ENCODE measurements at regions of chr12 and their contacts with region 1.

Region 1: DNA sequence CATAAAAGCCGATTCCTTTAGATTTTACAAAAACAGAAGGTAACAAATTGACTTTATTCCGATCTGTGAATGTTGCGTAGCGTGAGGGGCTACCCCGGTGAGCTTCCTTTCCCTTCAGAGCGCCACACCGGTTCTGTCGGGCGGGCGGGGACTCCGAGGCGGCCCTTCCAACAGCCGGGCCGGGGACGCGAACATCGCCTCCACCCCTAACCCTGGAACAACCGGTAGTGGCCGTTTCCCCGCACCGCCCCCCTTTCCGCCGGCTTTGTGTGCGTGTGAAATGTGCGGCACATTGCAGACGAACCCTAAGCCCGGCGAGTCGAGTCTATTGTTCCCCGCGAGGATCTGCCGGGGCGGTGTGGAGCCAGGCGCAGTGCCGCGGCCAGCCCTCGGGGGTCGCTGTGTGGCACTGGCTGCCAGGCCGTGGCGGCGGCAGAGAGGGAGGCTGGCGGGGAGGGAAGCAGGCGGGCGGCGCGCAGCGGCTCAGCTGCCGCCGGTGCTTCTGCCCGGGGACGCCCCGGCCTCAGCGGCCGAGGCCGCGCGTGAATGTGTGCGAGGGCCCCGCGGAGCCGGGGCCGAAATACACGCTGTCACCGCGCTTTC is 775 bp upstream of the ARID2 start:
- DNase-seq: peak; percentile 97
- H3K4me3 Mint-ChIP-seq: peak overlapping the region; percentile 95
- H3K27ac Mint-ChIP-seq: peak overlapping the region; percentile 99
- H3K4me1 Mint-ChIP-seq: peaks cover 17% of the 10 kb centered on the region
- H3K27me3 Mint-ChIP-seq: no peaks in the 10 kb centered on the region

Region 2: GRCh38 chr12:45215419-45216229 is 513.1 kb before region 1 on chr12 and contains the start of gene ANO6:
- CTCF ChIA-PET with region 1: interaction called, 8 read pairs
- POLR2A ChIA-PET with region 1: interaction called, 7 read pairs
- intact Hi-C with region 1: loop called (anchors 1 kb)
- DNase-seq: peak; percentile 88
- H3K4me3 Mint-ChIP-seq: peak within 1 kb of the TSS; percentile 90
- H3K27ac Mint-ChIP-seq: peak within 1 kb of the TSS; percentile 94
- H3K4me1 Mint-ChIP-seq: peaks cover 48% of the 10 kb centered on the region
- H3K27me3 Mint-ChIP-seq: no peaks in the 10 kb centered on the region
- total RNA-seq, gene ANO6: 19.0 to 21.4 TPM

Region 3: GRCh38 chr12:45543906-45544315 is 184.8 kb before region 1 on chr12:
- CTCF ChIA-PET with region 1: interaction called, 105 read pairs
- POLR2A ChIA-PET with region 1: interaction called, 6 read pairs
- intact Hi-C with region 1: loop called (anchors 1 kb)
- DNase-seq: peak; percentile 58
- H3K4me3 Mint-ChIP-seq: no peak overlapping the region
- H3K27ac Mint-ChIP-seq: no peak overlapping the region
- H3K4me1 Mint-ChIP-seq: peaks cover 1% of the 10 kb centered on the region
- H3K27me3 Mint-ChIP-seq: peaks cover 2% of the 10 kb centered on the region

Region 4: DNA sequence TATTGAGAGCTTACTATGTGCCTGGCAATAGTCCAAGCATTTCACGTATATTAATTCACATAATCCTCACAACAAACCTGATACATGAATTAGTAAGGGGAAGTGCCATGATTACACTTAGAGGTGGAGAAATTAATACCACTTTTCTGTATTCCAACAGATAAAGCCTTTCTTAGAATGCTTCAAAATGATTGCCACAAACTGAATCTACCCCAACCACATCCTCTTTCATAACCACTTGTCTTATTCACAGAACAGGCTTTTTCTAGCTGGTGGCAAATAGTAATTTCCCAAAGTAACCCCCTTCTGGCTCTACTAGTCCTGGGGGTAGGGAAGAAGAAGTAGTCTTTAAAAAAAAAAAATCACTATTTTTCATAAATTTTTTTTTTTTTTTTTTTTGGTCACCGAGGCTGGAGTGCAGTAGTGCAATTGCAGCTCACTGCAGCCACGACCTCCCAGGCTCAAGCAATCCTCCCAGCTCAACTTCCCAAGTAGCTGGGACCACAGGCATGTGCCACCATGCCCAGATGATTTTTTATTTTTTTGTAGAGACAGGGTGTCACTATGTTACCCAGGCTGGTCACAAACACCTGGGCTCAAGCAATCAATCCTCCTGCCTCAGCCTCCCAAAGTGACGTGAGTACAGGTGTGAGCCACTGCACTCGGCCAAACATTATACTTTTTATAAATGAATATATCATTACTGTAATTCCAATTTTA is 58.2 kb before region 1 on chr12:
- CTCF ChIA-PET with region 1: interaction called, 16 read pairs
- POLR2A ChIA-PET with region 1: interaction called, 4 read pairs
- intact Hi-C with region 1: loop called (anchors 2 kb)
- DNase-seq: no peak
- H3K4me3 Mint-ChIP-seq: no peak overlapping the region
- H3K27ac Mint-ChIP-seq: no peak overlapping the region
- H3K4me1 Mint-ChIP-seq: peaks cover 27% of the 10 kb centered on the region
- H3K27me3 Mint-ChIP-seq: no peaks in the 10 kb centered on the region

Region 5: GRCh38 chr12:46209914-46210872 is 481.5 kb after region 1 on chr12:
- CTCF ChIA-PET with region 1: no interaction called
- POLR2A ChIA-PET with region 1: no interaction called
- intact Hi-C with region 1: loop called (anchors 2 kb)
- DNase-seq: peak; percentile 82
- H3K4me3 Mint-ChIP-seq: peak overlapping the region; percentile 40
- H3K27ac Mint-ChIP-seq: peak overlapping the region; percentile 98
- H3K4me1 Mint-ChIP-seq: peaks cover 74% of the 10 kb centered on the region
- H3K27me3 Mint-ChIP-seq: no peaks in the 10 kb centered on the region